ENCODE measurements at regions of chr17 and their contacts with region 1.

Region 1: GRCh38 chr17:77331301-77331864 is 190.6 kb downstream of the SEC14L1 start:
- DNase-seq: peak; percentile 92 to 96 (median 94)
- H3K4me3 ChIP-seq: peak overlapping the region in 1 of 3 donors; percentile 25
- H3K27ac ChIP-seq: no peak overlapping the region
- H3K4me1 ChIP-seq: peaks cover 0 to 4% (median 0%) of the 10 kb centered on the region in 3 donors
- H3K27me3 ChIP-seq: no peaks in the 10 kb centered on the region
- CTCF ChIP-seq: peak; percentile 94

Region 2: DNA sequence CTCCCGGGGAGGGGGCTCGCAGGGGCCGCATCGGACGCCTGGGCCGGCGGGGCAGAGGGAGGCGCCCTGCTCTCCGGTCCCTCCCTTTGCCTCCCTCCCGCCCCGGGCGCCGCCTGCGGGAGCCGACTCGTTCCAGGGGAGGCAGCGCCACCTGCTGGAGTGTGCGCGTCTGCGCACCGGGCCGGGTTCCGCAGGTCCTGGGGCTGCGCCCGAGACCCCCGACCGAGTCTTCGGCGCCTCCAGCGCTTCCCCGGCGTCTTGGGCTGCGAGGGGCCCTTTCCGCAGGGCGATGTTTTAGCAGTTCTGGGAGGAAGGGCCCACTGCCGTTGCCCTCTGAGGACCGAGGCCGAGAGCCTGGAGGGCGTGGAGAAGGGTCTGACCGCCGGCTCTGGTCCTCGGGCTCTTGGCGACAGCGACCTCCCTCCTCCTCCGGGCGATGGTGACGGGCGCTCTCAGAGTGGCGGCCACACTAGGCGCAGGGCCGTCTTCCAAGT is 84.3 kb before region 1 on chr17:
- intact Hi-C with region 1: no loop called
- DNase-seq: peak; percentile 90 to 95 (median 93)
- H3K4me3 ChIP-seq: peak overlapping the region; percentile 26 to 46 (median 28)
- H3K27ac ChIP-seq: no peak overlapping the region
- H3K4me1 ChIP-seq: peaks cover 0 to 8% (median 3%) of the 10 kb centered on the region in 3 donors
- H3K27me3 ChIP-seq: no peaks in the 10 kb centered on the region
- CTCF ChIP-seq: peak; percentile 86

Region 3: DNA sequence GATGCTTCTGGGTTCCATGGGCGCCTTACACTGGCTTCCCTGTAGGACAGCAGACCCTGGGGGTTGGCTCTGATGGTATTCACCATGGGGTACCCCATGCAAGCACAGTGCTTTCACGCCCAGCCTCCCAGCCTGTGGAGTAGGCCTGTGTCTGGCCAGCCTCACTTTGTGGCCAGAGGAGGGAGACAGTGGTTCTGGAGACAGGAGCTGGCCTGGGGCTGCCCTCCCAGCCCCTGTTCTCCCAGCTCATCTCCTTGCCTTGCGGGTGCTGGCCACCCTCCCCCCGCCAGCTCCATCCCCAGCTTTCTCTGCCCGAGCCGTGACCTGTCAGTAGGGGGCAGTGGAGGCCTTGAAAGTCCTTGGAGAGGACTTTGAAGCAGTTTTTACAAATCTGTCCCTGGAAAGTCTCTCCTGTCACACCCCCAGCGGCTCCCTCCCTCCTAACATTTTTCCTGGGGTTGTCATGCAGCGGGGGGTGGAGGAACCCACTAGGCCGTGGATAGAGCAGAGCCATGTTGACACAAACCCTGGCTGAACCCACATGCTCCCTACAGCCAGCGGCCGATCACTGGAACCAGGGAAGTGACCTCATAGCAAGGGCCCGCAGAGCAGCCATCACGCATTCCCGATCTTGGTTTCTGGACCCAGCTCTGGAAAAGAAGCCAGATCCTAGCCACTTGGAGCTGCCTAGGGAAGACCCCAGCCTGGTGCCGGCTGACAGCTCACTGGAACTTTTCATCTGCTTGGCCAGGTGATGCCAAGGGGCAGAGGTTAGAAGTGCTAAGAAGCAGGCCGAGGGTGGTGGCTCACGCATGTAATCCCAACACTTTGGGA is 98.8 kb after region 1 on chr17:
- intact Hi-C with region 1: loop called (anchors 10 kb)
- DNase-seq: peak; percentile 90 to 97 (median 94)
- H3K4me3 ChIP-seq: no peak overlapping the region
- H3K27ac ChIP-seq: peak overlapping the region; percentile 59 to 80
- H3K4me1 ChIP-seq: peaks cover 0 to 72% (median 37%) of the 10 kb centered on the region in 3 donors
- H3K27me3 ChIP-seq: no peaks in the 10 kb centered on the region
- CTCF ChIP-seq: peak; percentile 68

Region 4: GRCh38 chr17:77494664-77495435 is 163.5 kb after region 1 on chr17:
- intact Hi-C with region 1: loop called (anchors 5 kb)
- DNase-seq: peak; percentile 79 to 89 (median 87)
- H3K4me3 ChIP-seq: no peak overlapping the region
- H3K27ac ChIP-seq: no peak overlapping the region
- H3K4me1 ChIP-seq: peaks cover 0 to 4% (median 0%) of the 10 kb centered on the region in 3 donors
- H3K27me3 ChIP-seq: no peaks in the 10 kb centered on the region
- CTCF ChIP-seq: peak; percentile 98